CD4-positive, alpha-beta T cell (primary cell): ENCODE measurements at regions of chr9 and their contacts with region 1.

Region 1: DNA sequence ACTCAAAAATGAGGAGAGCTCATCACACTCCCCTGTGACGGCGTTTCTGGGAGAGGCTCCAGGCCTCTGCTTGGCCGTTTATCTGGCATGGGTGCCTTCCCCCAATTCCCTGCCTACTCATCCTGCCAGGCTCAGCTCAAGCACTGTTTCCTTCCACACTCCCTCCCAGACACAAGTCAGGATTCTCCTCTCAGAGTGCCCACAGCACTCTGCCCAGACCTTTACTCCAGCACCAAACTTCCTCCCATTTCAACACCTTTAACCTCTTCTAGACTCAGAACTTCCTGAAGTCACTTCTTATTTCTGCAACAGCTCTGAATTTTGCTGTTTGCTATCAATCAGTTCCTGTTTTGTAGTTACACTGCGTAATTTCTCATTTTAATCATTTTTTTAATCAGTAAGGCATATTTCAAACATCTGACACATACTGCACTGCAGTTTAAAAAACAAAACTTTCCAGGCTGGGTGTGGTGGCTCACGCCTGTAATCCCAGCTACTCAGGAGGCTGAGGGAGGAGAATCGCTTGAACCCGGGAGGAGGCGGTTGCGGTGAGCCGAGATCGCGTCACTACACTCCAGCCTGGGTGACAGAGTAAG is 16.0 kb downstream of the TRMO start:
- DNase-seq: peak in 11 of 14 experiments; percentile 17 to 81 (median 58)
- ATAC-seq: peak; percentile 51
- H3K4me3 ChIP-seq: peak overlapping the region; percentile 44
- H3K4me3 Mint-ChIP-seq: peak overlapping the region; percentile 82
- H3K27ac ChIP-seq: peak overlapping the region; percentile 81 to 86
- H3K27ac Mint-ChIP-seq: peak overlapping the region; percentile 96
- H3K4me1 ChIP-seq: peaks cover 92% of the 10 kb centered on the region
- H3K4me1 Mint-ChIP-seq: peaks cover 94% of the 10 kb centered on the region
- H3K27me3 ChIP-seq: no peaks in the 10 kb centered on the region
- H3K27me3 Mint-ChIP-seq: no peaks in the 10 kb centered on the region
- CTCF ChIP-seq: no peak

Region 2: GRCh38 chr9:97696803-97697601 is 209.3 kb before region 1 on chr9 and contains the start of gene XPA:
- CTCF ChIA-PET with region 1: no interaction called
- POLR2A ChIA-PET with region 1: interaction called, 4 read pairs
- intact Hi-C with region 1: loop called in 1 of 2 experiments (anchors 5 kb)
- DNase-seq: peak; percentile 94 to 99 (median 97)
- ATAC-seq: peak; percentile 92
- H3K4me3 ChIP-seq: peak within 1 kb of the TSS; percentile 83
- H3K4me3 Mint-ChIP-seq: peak within 1 kb of the TSS; percentile 87
- H3K27ac ChIP-seq: peak within 1 kb of the TSS; percentile 80 to 81
- H3K27ac Mint-ChIP-seq: peak within 1 kb of the TSS; percentile 86
- H3K4me1 ChIP-seq: peaks cover 26% of the 10 kb centered on the region
- H3K4me1 Mint-ChIP-seq: peaks cover 62% of the 10 kb centered on the region
- H3K27me3 ChIP-seq: no peaks in the 10 kb centered on the region
- H3K27me3 Mint-ChIP-seq: peaks cover 4% of the 10 kb centered on the region
- CTCF ChIP-seq: no peak
- total RNA-seq, gene XPA: 20.2 to 23.3 TPM

Region 3: DNA sequence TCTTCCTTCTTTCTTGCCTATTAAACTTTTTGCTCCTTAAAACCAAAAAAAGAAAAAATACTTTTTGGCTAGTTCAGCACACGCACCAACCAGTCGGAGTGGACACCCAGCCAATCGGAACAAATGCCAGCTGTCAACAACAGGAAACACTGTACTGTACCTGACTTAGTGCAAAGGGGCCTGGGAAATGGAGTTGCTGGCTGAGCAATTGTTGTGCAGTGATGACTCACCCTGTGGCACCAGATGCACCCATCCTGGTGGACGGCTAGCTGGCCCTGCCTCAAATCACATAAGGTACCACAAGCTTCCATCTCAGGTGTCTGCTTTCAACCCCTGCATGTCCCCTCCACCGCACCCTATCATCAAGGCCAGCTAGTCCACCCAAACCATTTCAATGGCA is 32.5 kb before region 1 on chr9:
- CTCF ChIA-PET with region 1: no interaction called
- POLR2A ChIA-PET with region 1: no interaction called
- intact Hi-C with region 1: no loop called
- DNase-seq: no peak
- ATAC-seq: no peak
- H3K4me3 ChIP-seq: no peak overlapping the region
- H3K4me3 Mint-ChIP-seq: no peak overlapping the region
- H3K27ac ChIP-seq: no peak overlapping the region
- H3K27ac Mint-ChIP-seq: no peak overlapping the region
- H3K4me1 ChIP-seq: no peaks in the 10 kb centered on the region
- H3K4me1 Mint-ChIP-seq: no peaks in the 10 kb centered on the region
- H3K27me3 ChIP-seq: no peaks in the 10 kb centered on the region
- H3K27me3 Mint-ChIP-seq: peaks cover 16% of the 10 kb centered on the region
- CTCF ChIP-seq: no peak

Region 4: GRCh38 chr9:97890038-97890437 is 16.3 kb before region 1 on chr9:
- CTCF ChIA-PET with region 1: interaction called, 78 read pairs
- POLR2A ChIA-PET with region 1: interaction called, 10 read pairs
- intact Hi-C with region 1: loop called in 1 of 2 experiments (anchors 2 kb)
- DNase-seq: peak; percentile 53 to 82 (median 64)
- ATAC-seq: peak; percentile 74
- H3K4me3 ChIP-seq: no peak overlapping the region
- H3K4me3 Mint-ChIP-seq: no peak overlapping the region
- H3K27ac ChIP-seq: no peak overlapping the region
- H3K27ac Mint-ChIP-seq: peak overlapping the region; percentile 50
- H3K4me1 ChIP-seq: peaks cover 10% of the 10 kb centered on the region
- H3K4me1 Mint-ChIP-seq: peaks cover 12% of the 10 kb centered on the region
- H3K27me3 ChIP-seq: no peaks in the 10 kb centered on the region
- H3K27me3 Mint-ChIP-seq: no peaks in the 10 kb centered on the region
- CTCF ChIP-seq: peak; percentile 86

Region 5: GRCh38 chr9:97895695-97896332 is 10.5 kb before region 1 on chr9:
- CTCF ChIA-PET with region 1: interaction called, 78 read pairs
- POLR2A ChIA-PET with region 1: interaction called, 13 read pairs
- intact Hi-C with region 1: loop called in 1 of 2 experiments (anchors 2 kb)
- DNase-seq: peak in 3 of 14 experiments; percentile 31 to 49 (median 37)
- ATAC-seq: no peak
- H3K4me3 ChIP-seq: no peak overlapping the region
- H3K4me3 Mint-ChIP-seq: no peak overlapping the region
- H3K27ac ChIP-seq: no peak overlapping the region
- H3K27ac Mint-ChIP-seq: peak overlapping the region; percentile 8
- H3K4me1 ChIP-seq: peaks cover 8% of the 10 kb centered on the region
- H3K4me1 Mint-ChIP-seq: peaks cover 32% of the 10 kb centered on the region
- H3K27me3 ChIP-seq: no peaks in the 10 kb centered on the region
- H3K27me3 Mint-ChIP-seq: no peaks in the 10 kb centered on the region
- CTCF ChIP-seq: peak; percentile 21

Region 6: DNA sequence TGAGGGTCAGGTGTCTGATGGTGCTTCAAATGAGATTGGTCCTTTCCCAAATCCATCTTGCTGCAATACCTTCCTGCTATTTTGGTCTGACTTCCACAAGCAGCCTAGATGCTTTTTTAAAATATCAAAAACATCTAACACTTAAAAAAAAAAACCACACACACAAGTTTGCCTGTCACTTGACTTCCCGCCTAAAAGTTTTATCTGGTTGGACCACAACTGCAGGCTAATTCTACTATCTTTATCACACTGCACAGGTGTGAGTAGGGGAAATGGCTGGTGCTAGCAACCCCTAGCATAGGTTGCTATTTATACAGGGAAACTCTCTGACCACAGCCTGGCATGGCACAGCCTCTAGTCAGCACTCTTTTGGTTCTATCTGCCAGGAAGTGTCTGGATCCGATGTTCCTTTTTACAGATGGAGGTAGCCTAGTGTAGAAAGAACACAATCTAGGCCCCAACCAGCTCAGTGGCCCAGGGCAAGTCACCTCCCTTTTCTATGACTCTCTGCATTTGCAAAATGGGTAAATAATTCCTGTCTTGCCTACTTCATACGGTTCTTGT is 31.8 kb after region 1 on chr9 and contains the start of gene HEMGN:
- CTCF ChIA-PET with region 1: no interaction called
- POLR2A ChIA-PET with region 1: interaction called, 3 read pairs
- intact Hi-C with region 1: loop called in 1 of 2 experiments (anchors 1 kb)
- DNase-seq: peak in 9 of 14 experiments; percentile 16 to 87 (median 38)
- ATAC-seq: peak; percentile 98
- H3K4me3 ChIP-seq: no peak within 1 kb of the TSS
- H3K4me3 Mint-ChIP-seq: peak within 1 kb of the TSS; percentile 44
- H3K27ac ChIP-seq: peak within 1 kb of the TSS; percentile 18 to 57
- H3K27ac Mint-ChIP-seq: peak within 1 kb of the TSS; percentile 79
- H3K4me1 ChIP-seq: peaks cover 27% of the 10 kb centered on the region
- H3K4me1 Mint-ChIP-seq: peaks cover 57% of the 10 kb centered on the region
- H3K27me3 ChIP-seq: no peaks in the 10 kb centered on the region
- H3K27me3 Mint-ChIP-seq: no peaks in the 10 kb centered on the region
- CTCF ChIP-seq: no peak
- total RNA-seq, gene HEMGN: 0.30 to 0.34 TPM